ENCODE measurements at regions of chr21 and their contacts with region 1.

Region 1: GRCh38 chr21:43866260-43866629 is 1.2 kb downstream of the AGPAT3 start:
- DNase-seq: no peak
- ATAC-seq: peak; percentile 70
- H3K4me3 ChIP-seq: peak overlapping the region; percentile 75
- H3K27ac ChIP-seq: peak overlapping the region; percentile 85
- H3K4me1 ChIP-seq: peaks cover 20% of the 10 kb centered on the region
- H3K27me3 ChIP-seq: no peaks in the 10 kb centered on the region
- CTCF ChIP-seq: no peak
- EP300 ChIP-seq: no peak
- POLR2A ChIP-seq: no peak
- RAD21 ChIP-seq: no peak

Region 2: DNA sequence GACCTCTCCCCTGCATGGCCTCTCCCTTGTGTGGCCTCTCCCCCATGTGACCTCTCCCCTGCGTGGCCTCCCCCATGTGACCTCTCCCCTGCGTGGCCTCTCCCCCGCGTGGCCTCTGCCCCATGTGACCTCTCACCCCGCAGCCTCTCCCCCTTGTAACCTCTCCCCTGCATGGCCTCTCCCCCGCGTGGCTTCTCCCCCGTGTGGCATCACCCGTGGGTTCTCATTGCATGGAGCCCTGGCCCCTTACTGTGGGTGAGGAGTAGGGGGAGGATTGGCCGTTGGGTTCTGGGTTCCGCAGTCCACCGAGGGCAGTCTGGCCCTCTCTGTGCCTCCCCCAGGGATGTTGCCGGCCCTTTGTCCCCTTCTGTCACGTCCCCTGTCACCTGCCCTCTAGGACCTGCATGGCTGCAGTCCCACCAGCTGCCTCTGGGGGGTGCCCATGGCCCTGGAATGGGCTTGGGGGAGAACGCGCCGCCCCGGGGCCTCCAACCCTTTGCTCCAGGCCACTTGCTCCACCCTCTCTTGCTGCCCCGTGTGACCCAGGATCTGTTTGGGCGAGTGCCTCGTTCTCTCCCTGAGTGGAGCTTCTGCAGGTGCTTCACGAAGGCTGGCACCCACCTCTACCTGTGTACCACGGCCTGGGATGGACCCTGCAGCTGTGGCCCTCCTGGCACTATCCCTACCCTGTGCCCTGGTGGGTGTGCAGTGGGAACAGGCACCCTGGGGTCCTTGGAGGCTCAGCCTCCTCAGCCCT is 55.6 kb before region 1 on chr21:
- CTCF ChIA-PET with region 1: interaction called, 5 read pairs
- POLR2A ChIA-PET with region 1: no interaction called
- RAD21 ChIA-PET with region 1: interaction called, 4 read pairs
- SMC1A ChIA-PET with region 1: interaction called, 4 read pairs
- in situ Hi-C with region 1: no loop called
- intact Hi-C with region 1: loop called (anchors 1 kb)
- DNase-seq: peak; percentile 51
- ATAC-seq: peak; percentile 91
- H3K4me3 ChIP-seq: no peak overlapping the region
- H3K27ac ChIP-seq: peak overlapping the region; percentile 50
- H3K4me1 ChIP-seq: peaks cover 44% of the 10 kb centered on the region
- H3K27me3 ChIP-seq: no peaks in the 10 kb centered on the region
- CTCF ChIP-seq: peak; percentile 98 to 99 (median 99)
- EP300 ChIP-seq: no peak
- POLR2A ChIP-seq: no peak
- RAD21 ChIP-seq: peak; percentile 99

Region 3: DNA sequence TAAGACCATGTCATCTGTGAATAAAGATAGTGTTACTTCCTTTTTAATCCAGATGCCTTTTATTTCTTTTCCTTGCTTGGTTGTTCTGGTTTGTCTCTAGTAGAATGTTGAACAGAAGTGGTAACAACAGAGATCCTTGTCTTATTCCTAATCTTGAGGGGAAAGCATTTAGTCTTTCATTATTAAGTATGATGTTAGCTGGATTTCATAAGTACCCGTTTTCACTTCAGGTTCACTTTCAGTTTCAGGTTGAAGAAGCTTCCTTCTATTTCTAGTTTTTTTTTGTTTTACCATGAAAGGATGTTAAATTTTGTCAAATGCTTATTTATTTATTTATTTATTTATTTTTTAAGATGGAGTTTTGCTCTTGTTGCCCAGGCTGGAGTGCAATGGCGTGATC is 23.5 kb before region 1 on chr21:
- CTCF ChIA-PET with region 1: interaction called, 3 read pairs
- POLR2A ChIA-PET with region 1: interaction called, 3 read pairs
- RAD21 ChIA-PET with region 1: no interaction called
- SMC1A ChIA-PET with region 1: interaction called, 12 read pairs
- in situ Hi-C with region 1: no loop called
- intact Hi-C with region 1: no loop called
- DNase-seq: no peak
- ATAC-seq: peak; percentile 78
- H3K4me3 ChIP-seq: peak overlapping the region; percentile 51; the same call in 1 of the 2 replicates
- H3K27ac ChIP-seq: peak overlapping the region; percentile 6; the same call in 1 of the 2 replicates
- H3K4me1 ChIP-seq: 0 out of 2 replicates have a peak, but pooled peaks cover 4% of the 10 kb centered on the region
- H3K27me3 ChIP-seq: no peaks in the 10 kb centered on the region
- CTCF ChIP-seq: no peak
- EP300 ChIP-seq: no peak
- POLR2A ChIP-seq: no peak
- RAD21 ChIP-seq: no peak

Region 4: DNA sequence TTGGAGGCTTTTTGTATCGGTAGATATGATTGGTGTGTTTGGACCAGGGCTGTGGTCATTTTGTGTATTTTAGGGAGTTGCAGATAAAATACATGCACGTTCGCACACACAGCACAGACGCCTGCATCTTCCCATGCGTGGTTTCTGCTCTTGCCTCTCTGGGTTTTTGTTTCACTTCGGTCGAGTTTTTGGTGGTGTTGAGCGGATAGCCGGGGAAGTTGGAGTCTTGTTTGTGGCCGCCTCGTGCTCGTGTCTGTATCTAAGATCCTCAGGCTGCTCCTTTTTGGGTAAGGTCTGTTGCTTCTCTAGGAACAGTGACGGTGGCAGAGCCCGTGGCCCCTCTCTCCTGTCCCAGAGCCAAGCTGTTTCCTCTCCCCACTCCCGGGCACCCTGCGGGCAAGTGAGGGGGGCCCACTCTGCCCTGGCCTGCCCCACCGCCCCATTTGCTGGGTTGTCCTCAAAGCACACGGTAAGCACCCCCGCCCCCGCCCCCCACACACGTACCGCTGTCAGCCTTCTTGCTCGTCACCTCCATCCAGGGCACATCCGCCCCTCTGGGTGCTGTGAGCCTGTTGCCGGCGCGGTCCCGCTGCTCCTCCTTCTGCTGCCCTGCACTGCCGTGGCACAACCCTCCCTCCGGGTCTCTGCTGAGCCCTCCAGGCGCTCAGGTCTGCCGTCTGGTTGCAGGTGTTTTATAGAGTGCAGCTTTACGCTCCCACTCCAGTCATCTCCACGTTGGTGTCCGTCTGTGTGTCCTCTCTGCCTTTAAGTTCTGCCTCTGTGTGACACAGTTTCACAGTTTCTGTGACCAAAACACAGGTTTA is 50.7 kb after region 1 on chr21:
- CTCF ChIA-PET with region 1: interaction called, 10 read pairs
- POLR2A ChIA-PET with region 1: interaction called, 11 read pairs
- RAD21 ChIA-PET with region 1: interaction called, 18 read pairs
- SMC1A ChIA-PET with region 1: interaction called, 12 read pairs
- in situ Hi-C with region 1: no loop called
- intact Hi-C with region 1: loop called (anchors 2 kb)
- DNase-seq: peak; percentile 71
- ATAC-seq: peak; percentile 64
- H3K4me3 ChIP-seq: peak overlapping the region; percentile 73
- H3K27ac ChIP-seq: peak overlapping the region; percentile 88
- H3K4me1 ChIP-seq: peaks cover 20% of the 10 kb centered on the region
- H3K27me3 ChIP-seq: no peaks in the 10 kb centered on the region
- CTCF ChIP-seq: no peak
- EP300 ChIP-seq: no peak
- POLR2A ChIP-seq: peak; percentile 74
- RAD21 ChIP-seq: no peak

Region 5: DNA sequence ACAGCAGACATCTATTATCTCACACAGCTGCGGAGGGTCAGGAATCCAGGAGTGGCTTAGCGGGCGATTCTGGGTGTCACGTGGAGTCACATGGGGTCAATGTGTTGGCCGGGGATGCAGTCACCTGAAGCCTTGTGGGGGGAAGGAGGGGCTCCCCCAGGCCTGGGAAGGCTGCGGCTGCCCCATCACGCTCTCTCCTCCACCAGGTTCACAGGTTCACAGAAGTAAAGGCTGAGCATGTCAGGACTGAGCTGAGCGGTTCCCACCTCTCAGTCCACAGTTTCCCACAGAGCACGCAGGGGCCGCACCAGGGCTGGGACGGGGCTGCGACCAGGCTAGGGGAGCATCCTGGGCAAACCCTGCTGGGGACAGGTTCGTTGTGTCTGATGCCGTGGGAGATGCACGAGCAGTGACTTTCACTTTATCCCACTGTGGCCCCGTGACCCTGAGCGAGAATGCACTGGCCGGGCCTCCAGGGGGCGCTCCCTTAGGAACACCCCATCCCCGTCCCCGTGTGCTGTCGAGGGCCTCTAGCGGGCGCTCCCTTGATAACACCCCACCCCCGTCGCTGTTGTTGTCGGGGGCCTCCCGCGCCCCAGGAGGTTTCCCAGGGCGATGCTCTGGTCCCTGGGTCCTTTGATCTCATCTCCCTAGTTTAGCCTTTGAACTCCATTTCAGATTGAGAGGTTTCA is 72.7 kb after region 1 on chr21:
- CTCF ChIA-PET with region 1: interaction called, 7 read pairs
- POLR2A ChIA-PET with region 1: interaction called, 5 read pairs
- RAD21 ChIA-PET with region 1: interaction called, 6 read pairs
- SMC1A ChIA-PET with region 1: interaction called, 8 read pairs
- in situ Hi-C with region 1: no loop called
- intact Hi-C with region 1: loop called (anchors 2 kb)
- DNase-seq: peak; percentile 84
- ATAC-seq: peak; percentile 94
- H3K4me3 ChIP-seq: peak overlapping the region; percentile 70
- H3K27ac ChIP-seq: peak overlapping the region; percentile 79
- H3K4me1 ChIP-seq: peaks cover 26% of the 10 kb centered on the region
- H3K27me3 ChIP-seq: no peaks in the 10 kb centered on the region
- CTCF ChIP-seq: peak; percentile 100; a peak in 5 of 6 replicates
- EP300 ChIP-seq: peak; percentile 70 to 76; a peak in 3 of 4 replicates
- POLR2A ChIP-seq: peak; percentile 71
- RAD21 ChIP-seq: peak; percentile 95

Region 6: GRCh38 chr21:43967981-43968380 is 101.7 kb after region 1 on chr21:
- CTCF ChIA-PET with region 1: no interaction called
- POLR2A ChIA-PET with region 1: no interaction called
- RAD21 ChIA-PET with region 1: no interaction called
- SMC1A ChIA-PET with region 1: no interaction called
- in situ Hi-C with region 1: no loop called
- intact Hi-C with region 1: no loop called
- DNase-seq: no peak
- ATAC-seq: no peak
- H3K4me3 ChIP-seq: no peak overlapping the region
- H3K27ac ChIP-seq: no peak overlapping the region
- H3K4me1 ChIP-seq: no peaks in the 10 kb centered on the region
- H3K27me3 ChIP-seq: no peaks in the 10 kb centered on the region
- CTCF ChIP-seq: no peak
- EP300 ChIP-seq: no peak
- POLR2A ChIP-seq: no peak
- RAD21 ChIP-seq: no peak